Uterus (tissue), 4 donors: ENCODE measurements at regions of chr12 and their contacts with region 1.

Region 1: GRCh38 chr12:54191550-54192022 is 2.8 kb upstream of the SMUG1 start:
- DNase-seq: peak; percentile 81 to 84
- H3K4me3 ChIP-seq: no peak overlapping the region
- H3K27ac ChIP-seq: no peak overlapping the region
- H3K4me1 ChIP-seq: no peaks in the 10 kb centered on the region
- H3K27me3 ChIP-seq: peaks cover 0 to 5% of the 10 kb centered on the region in 2 donors
- CTCF ChIP-seq: peak; percentile 69 to 78 (median 72)
- POLR2A ChIP-seq: no peak

Region 2: GRCh38 chr12:54005853-54006686 is 185.5 kb before region 1 on chr12:
- intact Hi-C with region 1: loop called (anchors 5 kb)
- DNase-seq: peak; percentile 87 to 92
- H3K4me3 ChIP-seq: peak overlapping the region in 1 of 2 donors; percentile 14
- H3K27ac ChIP-seq: no peak overlapping the region
- H3K4me1 ChIP-seq: no peaks in the 10 kb centered on the region
- H3K27me3 ChIP-seq: peaks cover 9 to 33% of the 10 kb centered on the region in 2 donors
- CTCF ChIP-seq: peak; percentile 91 to 96 (median 94)
- POLR2A ChIP-seq: no peak

Region 3: GRCh38 chr12:54033980-54034784 is 157.4 kb before region 1 on chr12:
- intact Hi-C with region 1: loop called (anchors 2 kb)
- DNase-seq: no peak
- H3K4me3 ChIP-seq: peak overlapping the region; percentile 4 to 39
- H3K27ac ChIP-seq: no peak overlapping the region
- H3K4me1 ChIP-seq: no peaks in the 10 kb centered on the region
- H3K27me3 ChIP-seq: no peaks in the 10 kb centered on the region
- CTCF ChIP-seq: no peak
- POLR2A ChIP-seq: no peak